ENCODE measurements at regions of chr19 and their contacts with region 1.

Region 1: DNA sequence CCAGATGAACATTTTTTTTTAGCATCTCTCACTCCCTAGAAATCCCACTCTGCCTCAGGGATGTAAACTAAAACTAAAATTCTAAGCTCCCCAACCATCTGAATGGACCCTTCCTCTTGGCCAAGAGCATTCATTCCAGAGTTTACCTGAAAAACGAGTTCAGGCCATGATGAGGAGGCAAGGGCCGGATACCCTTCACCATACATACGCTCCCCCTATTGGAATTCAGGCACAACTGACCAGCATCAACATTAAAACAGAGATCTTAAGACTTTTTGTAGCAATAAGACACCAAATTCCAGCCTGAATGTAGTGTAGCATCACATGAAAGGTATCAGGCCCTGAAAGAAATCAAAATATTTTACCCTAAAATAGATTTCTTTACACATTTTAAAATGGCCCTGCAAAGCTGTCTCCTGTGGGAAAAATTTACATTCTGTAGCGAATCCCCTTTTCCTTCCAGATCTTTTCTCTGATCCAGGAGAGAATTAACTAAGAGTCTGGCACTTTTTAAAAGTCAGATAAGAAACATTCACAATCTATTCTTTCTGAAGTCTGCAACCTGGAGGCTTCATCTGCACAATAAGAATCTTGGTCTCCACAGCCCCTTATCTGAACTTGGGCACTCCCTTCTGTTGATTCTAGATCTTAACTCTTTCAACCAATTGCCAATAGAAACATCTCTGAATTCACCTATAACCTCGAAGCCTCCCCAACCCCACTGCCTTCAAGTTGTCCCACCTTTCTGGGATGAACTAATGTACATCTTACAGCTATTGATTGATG is 888.5 kb downstream of the UQCRFS1 start:
- DNase-seq: no peak

Region 2: GRCh38 chr19:27974082-27974513 is 350.4 kb before region 1 on chr19:
- intact Hi-C with region 1: loop called (anchors 2 kb)
- DNase-seq: no peak